Activated CD4-positive, alpha-beta memory T cell treated with anti-CD3 and anti-CD28 coated beads, Interleukin-2, amount 10 ng/mL, durations not matched to agents 7 days and 5 days (primary cell): ENCODE measurements at regions of chrX and their contacts with region 1.

Region 1: GRCh38 chrX:9341291-9342201 is 123.3 kb upstream of the TBL1X start:
- DNase-seq: peak; percentile 76
- H3K4me3 Mint-ChIP-seq: peak overlapping the region; percentile 69
- H3K27ac Mint-ChIP-seq: peak overlapping the region; percentile 92
- H3K4me1 Mint-ChIP-seq: peaks cover 38% of the 10 kb centered on the region
- H3K27me3 Mint-ChIP-seq: no peaks in the 10 kb centered on the region

Region 2: GRCh38 chrX:9318213-9318612 is 23.3 kb before region 1 on chrX:
- CTCF ChIA-PET with region 1: interaction called, 3 read pairs
- POLR2A ChIA-PET with region 1: interaction called, 12 read pairs
- DNase-seq: peak; percentile 64
- H3K4me3 Mint-ChIP-seq: no peak overlapping the region
- H3K27ac Mint-ChIP-seq: peak overlapping the region; percentile 40
- H3K4me1 Mint-ChIP-seq: peaks cover 27% of the 10 kb centered on the region
- H3K27me3 Mint-ChIP-seq: no peaks in the 10 kb centered on the region

Region 3: GRCh38 chrX:9362363-9362928 is 20.9 kb after region 1 on chrX:
- CTCF ChIA-PET with region 1: no interaction called
- POLR2A ChIA-PET with region 1: no interaction called
- DNase-seq: no peak
- H3K4me3 Mint-ChIP-seq: no peak overlapping the region
- H3K27ac Mint-ChIP-seq: no peak overlapping the region
- H3K4me1 Mint-ChIP-seq: peaks cover 1% of the 10 kb centered on the region
- H3K27me3 Mint-ChIP-seq: no peaks in the 10 kb centered on the region

Region 4: GRCh38 chrX:9464435-9465371 is 123.2 kb after region 1 on chrX and contains the start of gene TBL1X:
- CTCF ChIA-PET with region 1: interaction called, 4 read pairs
- POLR2A ChIA-PET with region 1: interaction called, 28 read pairs
- DNase-seq: peak; percentile 64
- H3K4me3 Mint-ChIP-seq: peak within 1 kb of the TSS; percentile 74
- H3K27ac Mint-ChIP-seq: peak within 1 kb of the TSS; percentile 81
- H3K4me1 Mint-ChIP-seq: peaks cover 45% of the 10 kb centered on the region
- H3K27me3 Mint-ChIP-seq: no peaks in the 10 kb centered on the region
- total RNA-seq, gene TBL1X: 39.5 to 44.0 TPM